Activated CD8-positive, alpha-beta T cell treated with anti-CD3 and anti-CD28 coated beads for 36 hours (primary cell): ENCODE measurements at regions of chr1 and their contacts with region 1.

Region 1: GRCh38 chr1:182614796-182615454 is 10.7 kb upstream of the RGS16 start:
- DNase-seq: peak; percentile 84
- ATAC-seq: peak; percentile 31
- H3K4me3 Mint-ChIP-seq: peak overlapping the region; percentile 77
- H3K27ac Mint-ChIP-seq: peak overlapping the region; percentile 89
- H3K4me1 Mint-ChIP-seq: peaks cover 57% of the 10 kb centered on the region
- H3K27me3 Mint-ChIP-seq: peaks cover 45% of the 10 kb centered on the region
- CTCF ChIP-seq: no peak

Region 2: GRCh38 chr1:182629499-182630096 is 14.7 kb after region 1 on chr1:
- CTCF ChIA-PET with region 1: interaction called, 13 read pairs
- POLR2A ChIA-PET with region 1: interaction called, 68 read pairs
- intact Hi-C with region 1: loop called (anchors 1 kb)
- DNase-seq: peak; percentile 93
- ATAC-seq: peak; percentile 95
- H3K4me3 Mint-ChIP-seq: no peak overlapping the region
- H3K27ac Mint-ChIP-seq: peak overlapping the region; percentile 22
- H3K4me1 Mint-ChIP-seq: peaks cover 56% of the 10 kb centered on the region
- H3K27me3 Mint-ChIP-seq: peaks cover 17% of the 10 kb centered on the region
- CTCF ChIP-seq: no peak

Region 3: GRCh38 chr1:182716740-182717720 is 102.1 kb after region 1 on chr1:
- CTCF ChIA-PET with region 1: interaction called, 15 read pairs
- POLR2A ChIA-PET with region 1: interaction called, 3 read pairs
- intact Hi-C with region 1: loop called (anchors 5 kb)
- DNase-seq: peak; percentile 11
- ATAC-seq: peak; percentile 24
- H3K4me3 Mint-ChIP-seq: no peak overlapping the region
- H3K27ac Mint-ChIP-seq: peak overlapping the region; percentile 61
- H3K4me1 Mint-ChIP-seq: peaks cover 55% of the 10 kb centered on the region
- H3K27me3 Mint-ChIP-seq: peaks cover 3% of the 10 kb centered on the region
- CTCF ChIP-seq: no peak